ENCODE measurements at regions of chr17 and their contacts with region 1.

Region 1: DNA sequence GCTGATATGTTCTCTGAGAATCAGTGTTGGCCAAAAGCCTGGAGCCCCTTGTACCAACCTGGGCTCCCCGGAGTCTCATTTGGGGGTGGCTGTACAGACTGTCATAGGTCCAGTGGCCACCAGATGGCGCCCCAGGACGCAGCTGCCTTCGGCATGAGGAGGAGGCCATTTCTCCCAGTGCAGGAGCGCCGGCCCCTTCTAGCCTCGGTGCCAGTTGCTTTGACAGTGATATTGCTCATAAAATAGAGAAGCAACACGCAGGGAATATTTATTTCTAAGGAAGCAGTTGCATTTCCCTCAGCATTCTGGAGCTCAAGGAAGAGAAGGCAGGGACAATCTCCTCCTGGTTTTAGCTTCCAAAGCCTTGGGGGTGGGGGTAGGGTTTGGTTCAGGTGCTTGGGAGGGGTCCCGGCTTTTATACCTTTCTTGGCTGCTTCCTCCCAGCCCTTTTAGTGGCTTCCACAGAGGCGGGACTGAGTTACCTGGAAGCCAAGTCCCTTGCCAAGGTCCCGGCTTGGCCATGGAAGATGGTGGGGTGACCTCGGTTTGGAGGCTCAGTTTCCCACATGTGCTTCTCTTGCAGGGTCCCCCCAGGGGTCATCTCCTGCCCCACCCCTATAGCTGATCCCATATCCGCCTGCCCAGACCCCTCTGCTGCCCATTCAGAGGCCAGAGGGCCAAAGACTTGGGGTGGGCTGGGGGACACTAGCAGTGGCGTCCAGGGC is 117.8 kb upstream of the CDC42EP4 start:
- DNase-seq: peak; percentile 90
- ATAC-seq: peak; percentile 93
- H3K4me3 ChIP-seq: no peak overlapping the region
- H3K27ac ChIP-seq: no peak overlapping the region
- H3K4me1 ChIP-seq: peaks cover 4% of the 10 kb centered on the region; the same call in 1 of the 2 replicates
- H3K27me3 ChIP-seq: 0 out of 2 replicates have a peak, but pooled peaks cover 4% of the 10 kb centered on the region
- CTCF ChIP-seq: peak; percentile 99

Region 2: DNA sequence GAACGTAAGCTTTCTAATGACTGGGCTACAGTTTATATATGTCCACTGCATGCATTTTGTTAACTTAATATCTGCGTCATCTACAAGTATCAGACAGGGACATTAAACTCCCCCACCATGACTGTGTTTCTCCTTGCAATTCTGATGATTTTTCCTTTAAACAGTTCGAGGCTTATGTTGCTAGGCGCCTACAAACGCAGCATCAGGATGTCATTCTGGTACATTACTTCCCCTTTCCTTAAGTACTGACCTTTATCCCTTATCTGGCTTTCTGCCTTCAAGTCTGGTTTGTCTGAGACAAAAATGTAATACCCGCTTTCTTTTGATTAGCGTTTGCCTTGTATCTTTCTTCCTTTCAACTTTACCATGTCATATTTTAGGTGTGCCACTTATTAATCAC is 699.5 kb before region 1 on chr17:
- CTCF ChIA-PET with region 1: no interaction called
- POLR2A ChIA-PET with region 1: no interaction called
- intact Hi-C with region 1: no loop called
- DNase-seq: no peak
- ATAC-seq: no peak
- H3K4me3 ChIP-seq: no peak overlapping the region
- H3K27ac ChIP-seq: no peak overlapping the region
- H3K4me1 ChIP-seq: peaks cover 24% of the 10 kb centered on the region
- H3K27me3 ChIP-seq: no peaks in the 10 kb centered on the region
- CTCF ChIP-seq: no peak

Region 3: GRCh38 chr17:73304971-73305812 is 124.4 kb before region 1 on chr17:
- CTCF ChIA-PET with region 1: no interaction called
- POLR2A ChIA-PET with region 1: no interaction called
- intact Hi-C with region 1: no loop called
- DNase-seq: peak; percentile 84
- ATAC-seq: peak; percentile 64
- H3K4me3 ChIP-seq: peak overlapping the region; percentile 55
- H3K27ac ChIP-seq: peak overlapping the region; percentile 82
- H3K4me1 ChIP-seq: peaks cover 67% of the 10 kb centered on the region
- H3K27me3 ChIP-seq: no peaks in the 10 kb centered on the region
- CTCF ChIP-seq: peak; percentile 60

Region 4: DNA sequence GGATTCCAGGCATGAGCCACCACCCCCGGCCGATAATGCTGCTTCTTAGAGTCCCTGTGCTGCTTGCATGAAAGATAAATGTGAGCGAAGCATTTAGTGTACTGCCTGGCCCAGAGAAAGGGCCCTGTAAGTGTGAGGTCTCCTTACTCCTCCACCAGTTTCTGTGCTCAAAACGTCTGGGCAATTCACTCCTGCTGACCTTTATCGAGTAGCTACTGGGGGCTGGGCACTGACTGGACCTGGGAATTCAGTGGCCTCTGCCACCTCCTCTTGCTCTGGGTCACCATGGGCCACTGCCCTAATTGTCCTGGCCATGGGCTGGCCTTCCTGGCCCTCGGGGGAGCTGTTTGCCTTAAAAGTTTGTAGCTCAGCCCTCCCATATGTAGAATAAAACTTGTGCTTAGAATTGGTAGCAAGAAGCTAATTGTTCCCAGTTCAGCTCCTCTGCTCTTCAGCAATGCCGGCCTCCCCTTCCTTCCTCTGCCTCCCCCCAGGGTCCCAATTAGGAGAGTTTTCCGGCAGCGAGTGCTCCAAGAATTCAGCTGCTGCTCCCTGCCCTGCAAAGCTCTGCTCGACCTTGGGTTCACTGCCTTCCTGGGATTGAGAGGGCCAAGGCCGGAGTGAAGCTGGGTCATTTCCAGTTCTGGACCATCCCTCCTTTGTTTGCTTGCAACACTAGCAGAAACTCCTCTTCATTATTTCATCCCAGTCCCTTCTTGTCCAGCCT is 18.9 kb before region 1 on chr17:
- CTCF ChIA-PET with region 1: no interaction called
- POLR2A ChIA-PET with region 1: no interaction called
- intact Hi-C with region 1: no loop called
- DNase-seq: no peak
- ATAC-seq: no peak
- H3K4me3 ChIP-seq: no peak overlapping the region
- H3K27ac ChIP-seq: no peak overlapping the region
- H3K4me1 ChIP-seq: no peaks in the 10 kb centered on the region
- H3K27me3 ChIP-seq: 0 out of 2 replicates have a peak, but pooled peaks cover 11% of the 10 kb centered on the region
- CTCF ChIP-seq: no peak

Region 5: GRCh38 chr17:73575470-73576221 is 146.0 kb after region 1 on chr17:
- CTCF ChIA-PET with region 1: no interaction called
- POLR2A ChIA-PET with region 1: no interaction called
- intact Hi-C with region 1: no loop called
- DNase-seq: no peak
- ATAC-seq: no peak
- H3K4me3 ChIP-seq: no peak overlapping the region
- H3K27ac ChIP-seq: no peak overlapping the region
- H3K4me1 ChIP-seq: no peaks in the 10 kb centered on the region
- H3K27me3 ChIP-seq: peaks cover 88% of the 10 kb centered on the region
- CTCF ChIP-seq: no peak

Region 6: GRCh38 chr17:74190172-74190571 is 760.6 kb after region 1 on chr17:
- CTCF ChIA-PET with region 1: no interaction called
- POLR2A ChIA-PET with region 1: no interaction called
- intact Hi-C with region 1: loop called (anchors 5 kb)
- DNase-seq: peak; percentile 50
- ATAC-seq: peak; percentile 44; the same call in 1 of the 2 replicates
- H3K4me3 ChIP-seq: no peak overlapping the region
- H3K27ac ChIP-seq: no peak overlapping the region
- H3K4me1 ChIP-seq: peaks cover 5% of the 10 kb centered on the region; the same call in 1 of the 2 replicates
- H3K27me3 ChIP-seq: peaks cover 27% of the 10 kb centered on the region
- CTCF ChIP-seq: no peak